BJ (cell line): ENCODE measurements at regions of chr10 and their contacts with region 1.

Region 1: DNA sequence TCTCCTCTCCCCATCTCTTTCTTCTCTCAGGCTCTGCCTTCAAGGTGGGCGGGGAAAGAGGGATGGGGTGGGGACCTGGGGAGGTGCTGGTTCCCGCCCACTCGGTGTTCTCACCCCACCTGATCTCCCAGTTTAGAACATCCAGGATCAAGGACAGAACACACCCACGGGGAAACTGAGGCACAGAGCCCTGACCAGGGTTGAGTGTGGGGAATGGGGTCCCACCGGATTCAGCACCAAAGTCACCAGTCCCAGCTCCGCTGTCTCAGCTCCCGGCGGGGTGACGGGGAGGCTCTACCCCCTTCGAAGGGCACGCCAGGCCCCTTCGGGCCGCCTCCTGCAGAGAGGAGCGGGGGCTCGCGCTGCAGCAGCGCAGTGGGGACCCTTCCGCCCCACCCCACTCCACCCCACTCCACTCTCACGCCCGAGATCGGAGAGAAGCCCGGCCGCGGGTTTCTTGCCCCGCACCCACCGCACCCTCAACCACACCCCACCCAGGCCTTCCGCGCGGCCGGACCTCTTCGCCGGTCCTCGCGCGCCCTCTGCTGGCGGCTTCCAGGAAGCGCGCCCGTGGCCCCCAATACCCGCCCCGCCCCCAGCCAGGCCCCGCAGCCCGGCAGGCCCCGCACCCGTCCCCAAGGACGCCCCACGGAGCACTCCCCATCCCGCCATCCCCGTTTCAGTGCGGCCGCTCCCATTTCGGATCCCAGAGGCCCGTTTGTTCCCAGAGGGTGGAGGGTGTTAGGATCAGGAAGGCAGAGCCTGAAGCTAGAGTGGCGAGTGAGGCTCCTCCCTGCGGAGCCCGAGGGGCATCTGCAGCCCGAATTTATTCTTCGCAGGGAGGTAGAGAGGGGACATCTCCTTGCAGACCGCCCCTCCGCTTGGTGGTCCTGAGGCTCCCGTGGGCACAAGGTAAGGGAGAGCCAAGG is 18.0 kb downstream of the POLL start:
- DNase-seq: no peak
- H3K4me3 ChIP-seq: peak overlapping the region; percentile 71
- H3K27me3 ChIP-seq: peaks cover 29% of the 10 kb centered on the region
- CTCF ChIP-seq: peak; percentile 72

Region 2: DNA sequence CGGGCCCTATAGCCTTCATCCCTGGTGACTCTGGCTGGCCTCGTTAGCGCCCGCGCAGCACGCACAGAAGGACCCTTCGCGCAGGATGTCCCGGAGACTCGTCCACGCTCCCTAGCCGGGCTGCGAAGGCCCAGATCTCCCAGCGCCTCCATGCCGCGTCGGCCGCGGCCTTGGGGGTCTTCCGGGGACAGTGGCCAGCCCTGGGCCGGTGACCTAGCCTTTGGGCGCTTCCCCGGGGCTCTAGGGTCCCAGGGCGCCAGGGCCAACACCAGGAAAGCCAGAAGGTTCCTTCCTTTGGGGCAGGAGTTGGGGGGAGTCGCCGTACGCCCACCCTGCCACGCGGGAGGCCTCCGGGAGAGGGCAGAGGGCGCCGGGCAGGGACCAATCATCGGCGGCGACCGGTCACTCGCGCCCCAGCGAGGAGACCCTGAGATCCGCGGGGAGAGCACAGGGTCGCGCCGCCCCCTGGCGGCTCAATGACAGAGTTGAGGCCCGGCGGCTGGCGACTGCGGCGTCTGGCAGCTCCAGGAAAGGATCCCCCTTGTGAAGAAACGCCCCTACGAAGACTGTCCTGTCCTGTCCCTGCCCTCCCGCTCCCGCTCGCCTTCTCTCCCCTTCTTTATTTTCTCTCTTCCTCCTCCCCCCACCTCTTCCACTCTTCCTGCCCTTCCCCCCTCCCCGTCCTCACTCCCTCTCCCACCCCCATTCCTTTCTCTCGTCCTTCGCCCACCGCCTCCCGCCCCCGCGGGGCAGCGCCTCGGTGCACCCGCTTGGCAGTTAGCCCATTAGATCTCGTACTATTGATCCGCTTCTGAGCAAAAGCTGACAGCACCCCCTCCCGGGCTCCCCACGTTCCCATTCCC is 278.5 kb before region 1 on chr10:
- CTCF ChIA-PET with region 1: interaction called, 19 read pairs
- POLR2A ChIA-PET with region 1: no interaction called
- DNase-seq: no peak
- H3K4me3 ChIP-seq: peak overlapping the region; percentile 40
- H3K27me3 ChIP-seq: peaks cover 46% of the 10 kb centered on the region
- CTCF ChIP-seq: peak; percentile 69

Region 3: DNA sequence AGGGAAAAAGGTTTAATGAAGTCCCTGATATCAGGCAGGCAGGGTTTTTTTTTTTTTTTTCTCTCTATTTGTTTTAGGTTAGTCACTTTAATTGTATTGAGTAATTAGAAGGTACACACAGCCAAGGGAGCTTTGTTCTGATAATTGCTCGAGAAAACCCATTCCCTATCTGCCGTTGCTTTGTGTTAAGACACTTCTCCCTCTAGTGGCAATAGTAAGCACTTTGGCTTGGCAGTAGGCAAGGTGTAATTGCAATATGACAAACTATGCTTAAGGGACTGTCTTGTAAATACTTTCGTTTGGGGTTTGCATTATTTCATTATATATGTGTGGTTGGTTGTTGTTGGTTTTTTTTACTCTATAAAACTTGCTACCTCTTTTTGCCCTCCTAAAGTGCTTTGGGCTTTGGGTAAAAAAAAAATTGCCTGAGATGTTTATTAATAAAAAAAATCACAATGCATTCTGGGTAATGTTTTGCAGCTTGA is 102.8 kb before region 1 on chr10:
- CTCF ChIA-PET with region 1: interaction called, 13 read pairs
- POLR2A ChIA-PET with region 1: no interaction called
- DNase-seq: peak; percentile 26
- H3K4me3 ChIP-seq: no peak overlapping the region
- H3K27me3 ChIP-seq: no peaks in the 10 kb centered on the region
- CTCF ChIP-seq: peak; percentile 90

Region 4: GRCh38 chr10:101558202-101558601 is 11.9 kb before region 1 on chr10:
- CTCF ChIA-PET with region 1: interaction called, 32 read pairs
- POLR2A ChIA-PET with region 1: no interaction called
- DNase-seq: no peak
- H3K4me3 ChIP-seq: no peak overlapping the region
- H3K27me3 ChIP-seq: 0 out of 2 replicates have a peak, but pooled peaks cover 1% of the 10 kb centered on the region
- CTCF ChIP-seq: no peak

Region 5: GRCh38 chr10:101587725-101588653 is 17.9 kb after region 1 on chr10 and contains the starts of genes DPCD and POLL:
- CTCF ChIA-PET with region 1: interaction called, 61 read pairs
- POLR2A ChIA-PET with region 1: no interaction called
- DNase-seq: peak; percentile 63
- H3K4me3 ChIP-seq: peak within 1 kb of the TSS; percentile 92
- H3K27me3 ChIP-seq: no peaks in the 10 kb centered on the region
- CTCF ChIP-seq: no peak
- polyA plus RNA-seq, gene DPCD: 46.4 and 51.9 TPM in 2 replicates
- polyA plus RNA-seq, gene POLL: 18.8 and 31.3 TPM in 2 replicates

Region 6: DNA sequence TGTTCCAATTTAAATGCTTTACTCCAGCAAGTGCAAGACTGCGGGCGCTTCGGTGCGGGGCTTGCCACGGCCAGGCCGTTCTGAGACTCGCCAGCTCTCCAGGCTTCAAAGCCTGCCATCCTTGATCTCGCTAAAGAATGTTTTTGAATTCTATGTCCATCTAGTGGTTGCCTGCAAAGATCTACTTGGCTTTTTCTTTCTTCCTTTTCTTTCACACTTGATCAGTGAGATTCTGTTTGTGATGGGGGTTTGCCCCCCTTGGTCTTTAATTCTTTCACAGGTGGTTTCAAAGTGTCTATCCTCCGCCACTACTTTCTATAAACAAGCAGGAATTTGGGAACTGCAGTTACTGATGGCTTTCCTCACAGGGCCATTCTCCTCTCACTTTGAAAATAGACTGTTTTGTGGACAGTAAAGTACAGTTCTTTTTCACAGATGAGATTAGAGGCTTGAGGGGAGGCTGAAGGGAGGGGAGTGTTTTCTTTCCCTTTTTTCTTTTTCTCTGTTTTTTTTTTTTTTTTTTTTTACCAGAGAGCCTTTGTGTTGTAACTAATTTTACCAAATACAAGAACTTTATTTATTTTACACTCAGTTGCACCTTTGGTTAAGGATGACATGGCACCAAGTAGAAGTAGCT is 140.1 kb after region 1 on chr10:
- CTCF ChIA-PET with region 1: no interaction called
- POLR2A ChIA-PET with region 1: no interaction called
- DNase-seq: no peak
- H3K4me3 ChIP-seq: no peak overlapping the region
- H3K27me3 ChIP-seq: no peaks in the 10 kb centered on the region
- CTCF ChIP-seq: peak; percentile 12; the same call in 1 of the 2 replicates